GM12878 (cell line): ENCODE measurements at regions of chr4 and their contacts with region 1.

Region 1: GRCh38 chr4:123770884-123771283 is 374.3 kb downstream of the SPRY1 start:
- DNase-seq: no peak
- ATAC-seq: no peak
- H3K4me3 ChIP-seq: no peak overlapping the region
- H3K27ac ChIP-seq: no peak overlapping the region
- H3K4me1 ChIP-seq: no peaks in the 10 kb centered on the region
- H3K27me3 ChIP-seq: no peaks in the 10 kb centered on the region
- CTCF ChIP-seq: no peak
- EP300 ChIP-seq: no peak
- POLR2A ChIP-seq: no peak
- RAD21 ChIP-seq: no peak

Region 2: GRCh38 chr4:123755655-123756054 is 15.2 kb before region 1 on chr4:
- CTCF ChIA-PET with region 1: interaction called, 20 read pairs
- POLR2A ChIA-PET with region 1: no interaction called
- RAD21 ChIA-PET with region 1: no interaction called
- SMC1A ChIA-PET with region 1: interaction called, 5 read pairs
- in situ Hi-C with region 1: no loop called
- intact Hi-C with region 1: no loop called
- DNase-seq: no peak
- ATAC-seq: no peak
- H3K4me3 ChIP-seq: no peak overlapping the region
- H3K27ac ChIP-seq: no peak overlapping the region
- H3K4me1 ChIP-seq: no peaks in the 10 kb centered on the region
- H3K27me3 ChIP-seq: no peaks in the 10 kb centered on the region; a peak in 1 of 4 replicates
- CTCF ChIP-seq: no peak
- EP300 ChIP-seq: no peak
- POLR2A ChIP-seq: no peak
- RAD21 ChIP-seq: no peak

Region 3: DNA sequence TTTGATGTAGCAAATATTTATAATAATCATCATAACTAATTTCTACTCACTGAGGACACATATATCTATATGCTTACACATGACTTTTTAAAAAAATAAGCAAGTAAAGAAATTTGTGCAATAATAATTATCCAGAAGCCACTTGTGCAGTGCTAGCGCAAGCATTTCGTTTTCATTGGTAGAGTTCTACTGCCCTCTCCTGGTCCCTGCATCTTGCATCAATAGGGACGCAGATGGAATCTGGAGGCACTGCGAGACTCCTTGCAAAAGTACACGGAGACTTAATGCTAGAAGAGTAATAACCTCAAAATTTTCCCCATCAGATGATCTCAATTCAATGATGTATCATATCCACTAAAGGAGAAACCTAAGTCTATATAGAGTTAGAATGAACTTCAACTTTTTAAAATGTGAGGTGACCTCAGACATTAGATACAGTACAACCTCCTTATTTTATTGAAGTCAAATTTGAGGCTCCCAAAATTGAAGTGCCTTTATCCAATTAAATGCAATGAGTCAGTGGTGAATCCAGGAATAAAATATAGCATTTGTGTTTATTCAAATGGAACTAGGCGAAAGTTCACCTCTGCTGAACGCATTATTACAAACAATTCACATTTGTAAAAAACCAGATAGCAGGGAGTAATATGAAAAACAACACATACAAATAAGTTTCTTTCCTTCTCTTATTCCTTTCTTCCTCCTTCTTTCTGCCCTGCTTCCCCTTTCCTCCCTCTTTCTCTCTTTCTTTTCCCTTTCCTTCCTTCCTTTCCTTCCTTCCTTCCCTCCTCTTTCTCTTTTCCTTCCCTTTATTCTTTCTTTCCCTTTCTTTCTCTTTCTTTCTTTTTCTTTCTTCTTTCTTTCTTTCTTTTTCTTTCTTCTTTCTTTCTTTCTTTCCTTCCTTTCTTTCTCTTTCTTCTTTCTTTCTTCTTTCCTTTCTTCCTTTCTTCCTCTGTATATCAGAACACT is 491.6 kb after region 1 on chr4:
- CTCF ChIA-PET with region 1: interaction called, 14 read pairs
- POLR2A ChIA-PET with region 1: no interaction called
- RAD21 ChIA-PET with region 1: interaction called, 7 read pairs
- SMC1A ChIA-PET with region 1: interaction called, 8 read pairs
- in situ Hi-C with region 1: loop called (anchors 5 kb)
- intact Hi-C with region 1: loop called (anchors 1 kb)
- DNase-seq: peak; percentile 11
- ATAC-seq: peak; percentile 88
- H3K4me3 ChIP-seq: no peak overlapping the region
- H3K27ac ChIP-seq: no peak overlapping the region
- H3K4me1 ChIP-seq: no peaks in the 10 kb centered on the region
- H3K27me3 ChIP-seq: no peaks in the 10 kb centered on the region
- CTCF ChIP-seq: peak; percentile 69 to 82 (median 74)
- EP300 ChIP-seq: no peak
- POLR2A ChIP-seq: no peak
- RAD21 ChIP-seq: peak; percentile 90

Region 4: DNA sequence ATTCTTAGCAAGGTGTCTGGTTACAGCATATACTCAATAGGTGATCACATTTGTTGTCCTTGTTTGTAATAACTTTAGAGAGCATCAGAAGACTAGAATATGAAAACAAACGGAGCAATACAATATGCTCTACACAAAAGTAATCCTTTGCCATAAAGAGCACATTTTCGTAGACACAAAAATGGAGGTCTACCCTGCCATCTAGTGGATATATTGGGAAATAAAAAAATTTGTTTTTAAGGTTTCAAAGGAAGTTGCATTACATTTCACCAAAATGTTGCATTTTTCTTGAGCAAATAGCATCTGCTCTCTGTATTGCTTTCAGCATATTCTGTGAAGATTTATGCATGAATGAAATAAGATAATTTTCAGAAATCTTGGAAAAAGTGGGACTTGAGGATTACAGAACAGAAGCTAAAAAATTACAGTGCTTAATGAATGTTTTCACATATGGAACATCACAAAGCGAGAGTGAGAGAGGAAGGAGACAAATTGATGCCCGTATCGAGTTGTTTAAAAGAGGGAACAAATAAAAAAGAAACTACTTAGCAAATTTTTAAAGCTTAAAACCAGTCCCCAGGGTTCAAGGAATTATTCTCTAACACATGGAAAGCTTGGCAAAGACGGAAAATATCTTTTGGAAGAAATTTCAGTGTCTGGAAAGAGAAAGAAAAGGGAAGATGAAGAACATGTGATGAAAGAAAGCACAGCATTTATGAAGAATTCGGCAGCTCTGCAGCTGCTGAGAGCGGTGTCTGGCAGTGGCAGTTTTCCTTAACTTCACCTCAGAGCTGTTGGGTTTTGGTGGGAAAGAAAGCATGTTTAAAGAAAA is 551.6 kb after region 1 on chr4:
- CTCF ChIA-PET with region 1: interaction called, 19 read pairs
- POLR2A ChIA-PET with region 1: no interaction called
- RAD21 ChIA-PET with region 1: interaction called, 4 read pairs
- SMC1A ChIA-PET with region 1: interaction called, 12 read pairs
- in situ Hi-C with region 1: no loop called
- intact Hi-C with region 1: loop called (anchors 1 kb)
- DNase-seq: no peak
- ATAC-seq: peak; percentile 20; the same call in 1 of the 3 replicates
- H3K4me3 ChIP-seq: no peak overlapping the region
- H3K27ac ChIP-seq: no peak overlapping the region
- H3K4me1 ChIP-seq: no peaks in the 10 kb centered on the region
- H3K27me3 ChIP-seq: no peaks in the 10 kb centered on the region
- CTCF ChIP-seq: peak in 2 of 3 experiments; percentile 51 to 53; a peak in 4 of 6 replicates
- EP300 ChIP-seq: no peak
- POLR2A ChIP-seq: no peak
- RAD21 ChIP-seq: peak; percentile 44